ENCODE measurements at regions of chr9 and their contacts with region 1.

Region 1: DNA sequence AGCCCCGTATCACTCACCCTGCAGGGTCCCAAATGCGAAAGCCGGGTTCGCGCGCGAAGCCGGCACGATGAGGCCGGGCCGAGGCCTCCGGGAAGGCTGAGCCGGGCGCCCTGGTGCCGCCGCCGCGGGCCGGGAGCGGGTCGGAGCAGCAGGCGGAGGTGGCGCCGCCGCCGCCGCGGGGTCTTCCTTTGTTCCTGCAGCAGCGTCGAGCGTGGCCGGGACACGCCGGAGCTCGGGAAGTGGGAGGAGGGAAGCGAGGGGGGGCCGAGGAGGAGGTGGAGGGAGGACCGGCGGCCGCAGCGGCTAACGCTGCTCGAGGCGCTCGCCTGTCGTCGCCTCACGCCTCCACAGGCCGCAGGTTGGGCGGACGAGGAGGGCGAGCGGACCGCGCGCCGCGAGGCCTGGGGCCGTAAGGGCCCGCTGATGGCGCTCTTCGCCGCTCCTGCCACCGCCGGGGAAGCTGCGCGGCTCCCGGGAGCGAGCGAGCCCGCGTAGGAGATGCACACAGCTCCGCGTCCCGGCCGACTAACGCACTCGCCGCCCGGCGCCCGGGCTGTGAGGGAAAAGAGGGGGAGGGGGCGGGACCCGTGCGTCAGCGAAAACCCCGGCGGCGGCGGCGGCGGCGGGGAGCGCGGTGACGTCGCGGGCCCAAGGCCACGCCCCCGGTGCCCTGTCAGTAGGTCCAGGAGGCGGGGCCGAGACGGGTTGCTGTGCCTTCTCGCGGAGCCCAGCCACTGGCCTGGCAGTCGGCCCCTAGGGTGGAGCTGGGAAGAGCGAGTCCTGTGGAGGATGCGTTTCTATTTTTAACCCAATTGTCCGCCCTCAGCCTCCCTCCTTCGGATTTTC is at the start of gene ZFAND5:
- DNase-seq: peak; percentile 89 to 93 (median 91)
- H3K4me3 ChIP-seq: peak within 1 kb of the TSS; percentile 98
- H3K4me3 Mint-ChIP-seq: peak within 1 kb of the TSS; percentile 90 to 97 (median 96)
- H3K27ac ChIP-seq: peak within 1 kb of the TSS; percentile 97
- H3K27ac Mint-ChIP-seq: peak within 1 kb of the TSS; percentile 96 to 100 (median 99)
- H3K4me1 ChIP-seq: peaks cover 43% of the 10 kb centered on the region
- H3K4me1 Mint-ChIP-seq: peaks cover 27 to 50% (median 37%) of the 10 kb centered on the region in 4 donors
- H3K27me3 ChIP-seq: no peaks in the 10 kb centered on the region
- H3K27me3 Mint-ChIP-seq: no peaks in the 10 kb centered on the region
- total RNA-seq, gene ZFAND5: 143 to 148 TPM

Region 2: DNA sequence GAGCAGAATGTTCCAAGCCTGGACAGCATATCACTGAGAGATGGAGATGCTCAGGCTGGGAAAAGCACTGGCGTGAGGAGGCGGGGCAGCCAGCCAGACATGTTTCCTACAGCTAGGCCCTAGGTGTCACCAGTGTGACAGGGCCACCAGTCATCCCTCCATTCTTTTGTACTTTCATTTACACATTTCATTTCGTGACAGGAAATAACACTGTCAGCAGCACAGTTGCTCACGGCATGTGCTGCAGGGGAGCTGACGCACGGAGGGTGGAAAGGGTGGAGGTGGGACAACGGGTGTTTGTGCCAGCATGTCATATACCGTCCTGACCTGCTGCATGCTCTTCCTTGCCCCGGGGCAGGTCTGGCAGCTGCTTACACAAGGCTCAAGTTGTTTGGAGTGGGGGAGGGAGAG is 581.8 kb before region 1 on chr9:
- CTCF ChIA-PET with region 1: no interaction called
- POLR2A ChIA-PET with region 1: interaction called, 3 read pairs
- intact Hi-C with region 1: loop called (anchors 5 kb)
- DNase-seq: peak; percentile 86 to 95 (median 90)
- H3K4me3 ChIP-seq: no peak overlapping the region
- H3K4me3 Mint-ChIP-seq: peak overlapping the region; percentile 64 to 86 (median 82)
- H3K27ac ChIP-seq: peak overlapping the region; percentile 83
- H3K27ac Mint-ChIP-seq: peak overlapping the region; percentile 93 to 100 (median 99)
- H3K4me1 ChIP-seq: peaks cover 41% of the 10 kb centered on the region
- H3K4me1 Mint-ChIP-seq: peaks cover 36 to 51% (median 40%) of the 10 kb centered on the region in 4 donors
- H3K27me3 ChIP-seq: no peaks in the 10 kb centered on the region
- H3K27me3 Mint-ChIP-seq: no peaks in the 10 kb centered on the region

Region 3: GRCh38 chr9:72292256-72292682 is 72.6 kb before region 1 on chr9:
- CTCF ChIA-PET with region 1: interaction called, 3 read pairs
- POLR2A ChIA-PET with region 1: interaction called, 3 read pairs
- intact Hi-C with region 1: loop called (anchors 2 kb)
- DNase-seq: peak in 4 of 5 donors; percentile 24 to 37 (median 29)
- H3K4me3 ChIP-seq: no peak overlapping the region
- H3K4me3 Mint-ChIP-seq: no peak overlapping the region
- H3K27ac ChIP-seq: no peak overlapping the region
- H3K27ac Mint-ChIP-seq: no peak overlapping the region
- H3K4me1 ChIP-seq: no peaks in the 10 kb centered on the region
- H3K4me1 Mint-ChIP-seq: peaks cover 0 to 3% (median under 1%) of the 10 kb centered on the region in 4 donors
- H3K27me3 ChIP-seq: no peaks in the 10 kb centered on the region
- H3K27me3 Mint-ChIP-seq: peaks cover 5 to 6% of the 10 kb centered on the region in 2 donors

Region 4: GRCh38 chr9:72443855-72444254 is 79.0 kb after region 1 on chr9:
- CTCF ChIA-PET with region 1: no interaction called
- POLR2A ChIA-PET with region 1: interaction called, 29 read pairs
- intact Hi-C with region 1: loop called (anchors 1 kb)
- DNase-seq: peak in 3 of 5 donors; percentile 10 to 42 (median 14)
- H3K4me3 ChIP-seq: no peak overlapping the region
- H3K4me3 Mint-ChIP-seq: peak overlapping the region in 5 of 8 donors; percentile 25 to 67 (median 39)
- H3K27ac ChIP-seq: peak overlapping the region; percentile 5
- H3K27ac Mint-ChIP-seq: peak overlapping the region; percentile 48 to 92 (median 80)
- H3K4me1 ChIP-seq: peaks cover 36% of the 10 kb centered on the region
- H3K4me1 Mint-ChIP-seq: peaks cover 22 to 41% (median 31%) of the 10 kb centered on the region in 4 donors
- H3K27me3 ChIP-seq: no peaks in the 10 kb centered on the region
- H3K27me3 Mint-ChIP-seq: no peaks in the 10 kb centered on the region

Region 5: GRCh38 chr9:72586388-72587130 is 221.7 kb after region 1 on chr9:
- CTCF ChIA-PET with region 1: interaction called, 8 read pairs
- POLR2A ChIA-PET with region 1: interaction called, 17 read pairs
- intact Hi-C with region 1: no loop called
- DNase-seq: peak; percentile 23 to 68 (median 29)
- H3K4me3 ChIP-seq: no peak overlapping the region
- H3K4me3 Mint-ChIP-seq: peak overlapping the region in 7 of 8 donors; percentile 6 to 65 (median 26)
- H3K27ac ChIP-seq: no peak overlapping the region
- H3K27ac Mint-ChIP-seq: peak overlapping the region; percentile 19 to 81 (median 73)
- H3K4me1 ChIP-seq: peaks cover 10% of the 10 kb centered on the region
- H3K4me1 Mint-ChIP-seq: peaks cover 15 to 27% (median 17%) of the 10 kb centered on the region in 4 donors
- H3K27me3 ChIP-seq: no peaks in the 10 kb centered on the region
- H3K27me3 Mint-ChIP-seq: no peaks in the 10 kb centered on the region

Region 6: DNA sequence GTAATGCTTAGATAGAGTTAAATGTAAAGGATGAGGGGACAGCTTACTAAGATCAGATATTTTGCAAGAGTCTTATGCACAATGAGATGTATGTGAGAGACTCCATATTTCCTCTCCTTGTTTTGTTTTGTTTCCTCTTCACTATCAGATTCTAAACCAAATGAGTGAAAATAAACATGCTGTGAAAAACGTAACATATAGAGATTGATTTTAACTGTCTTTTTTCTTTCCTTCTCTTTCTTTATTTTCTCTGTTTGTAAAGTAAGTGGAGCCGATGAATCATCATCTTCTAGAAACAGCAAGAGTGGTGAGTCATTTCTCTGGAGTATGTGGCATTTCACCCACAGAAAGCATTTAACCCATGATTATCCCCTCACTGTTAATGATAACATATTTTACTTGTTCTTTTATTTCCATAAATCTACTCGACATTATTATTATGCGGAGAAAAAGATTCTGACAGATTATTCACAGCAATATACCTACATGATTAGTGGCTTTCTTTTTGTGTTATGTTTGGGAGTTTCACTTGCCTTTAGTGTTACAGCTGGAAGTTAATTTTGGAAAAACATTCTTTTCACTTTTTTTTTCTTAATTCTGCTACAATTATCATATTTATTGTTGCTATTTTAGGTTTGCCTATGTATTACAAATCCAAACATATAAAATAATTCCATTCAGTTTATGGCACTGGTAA is 784.6 kb after region 1 on chr9:
- CTCF ChIA-PET with region 1: no interaction called
- POLR2A ChIA-PET with region 1: interaction called, 13 read pairs
- intact Hi-C with region 1: loop called (anchors 1 kb)
- DNase-seq: peak in 4 of 5 donors; percentile 33 to 68 (median 50)
- H3K4me3 ChIP-seq: peak overlapping the region in 1 of 2 donors; percentile 17
- H3K4me3 Mint-ChIP-seq: peak overlapping the region; percentile 37 to 83 (median 78)
- H3K27ac ChIP-seq: peak overlapping the region; percentile 75
- H3K27ac Mint-ChIP-seq: peak overlapping the region; percentile 82 to 99 (median 95)
- H3K4me1 ChIP-seq: peaks cover 41% of the 10 kb centered on the region
- H3K4me1 Mint-ChIP-seq: peaks cover 24 to 51% (median 32%) of the 10 kb centered on the region in 4 donors
- H3K27me3 ChIP-seq: no peaks in the 10 kb centered on the region
- H3K27me3 Mint-ChIP-seq: no peaks in the 10 kb centered on the region

Region 7: GRCh38 chr9:73357607-73358006 is 992.7 kb after region 1 on chr9:
- CTCF ChIA-PET with region 1: no interaction called
- POLR2A ChIA-PET with region 1: no interaction called
- intact Hi-C with region 1: no loop called
- DNase-seq: no peak
- H3K4me3 ChIP-seq: no peak overlapping the region
- H3K4me3 Mint-ChIP-seq: no peak overlapping the region
- H3K27ac ChIP-seq: no peak overlapping the region
- H3K27ac Mint-ChIP-seq: no peak overlapping the region
- H3K4me1 ChIP-seq: no peaks in the 10 kb centered on the region
- H3K4me1 Mint-ChIP-seq: no peaks in the 10 kb centered on the region
- H3K27me3 ChIP-seq: no peaks in the 10 kb centered on the region
- H3K27me3 Mint-ChIP-seq: no peaks in the 10 kb centered on the region

Measured in CD4-positive, alpha-beta memory T cell (primary cell).